ENCODE measurements at regions of chr9 and their contacts with region 1.

Region 1: GRCh38 chr9:107749787-107750444 is 260.3 kb upstream of the KLF4 start:
- DNase-seq: peak; percentile 90 to 97
- ATAC-seq: peak; percentile 84
- H3K4me3 ChIP-seq: peak overlapping the region in 1 of 4 donors; percentile 19
- H3K27ac ChIP-seq: peak overlapping the region; percentile 87 to 91 (median 88)
- H3K4me1 ChIP-seq: peaks cover 23 to 36% of the 10 kb centered on the region in 2 donors
- H3K27me3 ChIP-seq: no peaks in the 10 kb centered on the region
- CTCF ChIP-seq: no peak
- POLR2A ChIP-seq: peak; percentile 6 to 27

Region 2: GRCh38 chr9:107489687-107490605 is 260.0 kb before region 1 on chr9 and contains the start of gene KLF4:
- in situ Hi-C with region 1: loop called (anchors 25 kb)
- intact Hi-C with region 1: loop called (anchors 2 kb)
- DNase-seq: peak; percentile 89 to 91
- ATAC-seq: peak; percentile 82 to 84
- H3K4me3 ChIP-seq: peak within 1 kb of the TSS; percentile 75 to 91 (median 82)
- H3K27ac ChIP-seq: peak within 1 kb of the TSS; percentile 82 to 90 (median 90)
- H3K4me1 ChIP-seq: peaks cover 8 to 9% of the 10 kb centered on the region in 2 donors
- H3K27me3 ChIP-seq: no peaks in the 10 kb centered on the region
- CTCF ChIP-seq: no peak
- POLR2A ChIP-seq: peak; percentile 94 to 95
- total RNA-seq, gene KLF4: 15.7 to 62.6 (median 32.4) TPM

Region 3: GRCh38 chr9:107685901-107686300 is 64.0 kb before region 1 on chr9:
- in situ Hi-C with region 1: no loop called
- intact Hi-C with region 1: loop called (anchors 2 kb)
- DNase-seq: peak; percentile 58 to 76
- ATAC-seq: peak; percentile 100
- H3K4me3 ChIP-seq: no peak overlapping the region
- H3K27ac ChIP-seq: peak overlapping the region; percentile 28 to 71 (median 64)
- H3K4me1 ChIP-seq: peaks cover 0 to 10% of the 10 kb centered on the region in 2 donors
- H3K27me3 ChIP-seq: no peaks in the 10 kb centered on the region
- CTCF ChIP-seq: no peak
- POLR2A ChIP-seq: no peak

Region 4: DNA sequence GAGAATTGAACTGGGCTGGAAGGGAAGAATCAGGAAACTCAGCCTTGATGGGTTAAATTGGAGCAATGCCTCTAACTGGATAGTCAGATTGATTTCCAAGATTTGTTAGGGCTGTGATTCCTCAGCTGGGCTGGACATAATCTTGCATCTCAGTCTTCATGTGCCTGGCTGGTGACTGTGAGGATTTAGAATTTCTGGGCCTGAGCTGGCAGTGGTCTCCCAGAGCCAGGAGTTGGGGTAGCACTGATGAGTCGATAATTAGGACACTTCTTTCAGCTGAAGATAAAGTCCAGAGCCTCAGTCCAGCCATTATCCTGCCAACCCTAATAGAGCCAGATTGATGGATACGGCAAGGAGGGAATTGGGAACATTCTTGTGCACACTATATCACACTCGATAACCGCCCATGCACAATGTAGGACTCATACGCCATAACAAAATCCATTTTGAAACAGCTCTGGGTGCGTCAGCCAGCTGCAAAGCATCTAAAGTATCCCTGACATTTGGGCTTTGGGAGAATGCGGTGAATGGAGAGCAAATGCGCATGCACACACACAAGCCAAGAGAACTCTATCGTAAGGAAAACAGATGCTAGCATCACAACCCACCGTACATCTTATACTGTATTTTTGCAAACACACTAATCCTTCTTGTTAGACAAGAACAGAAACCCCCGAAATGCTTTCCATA is 144.8 kb after region 1 on chr9:
- in situ Hi-C with region 1: no loop called
- intact Hi-C with region 1: loop called (anchors 5 kb)
- DNase-seq: no peak
- ATAC-seq: no peak
- H3K4me3 ChIP-seq: no peak overlapping the region
- H3K27ac ChIP-seq: no peak overlapping the region
- H3K4me1 ChIP-seq: peaks cover 11 to 19% of the 10 kb centered on the region in 2 donors
- H3K27me3 ChIP-seq: no peaks in the 10 kb centered on the region
- CTCF ChIP-seq: no peak
- POLR2A ChIP-seq: no peak

Region 5: DNA sequence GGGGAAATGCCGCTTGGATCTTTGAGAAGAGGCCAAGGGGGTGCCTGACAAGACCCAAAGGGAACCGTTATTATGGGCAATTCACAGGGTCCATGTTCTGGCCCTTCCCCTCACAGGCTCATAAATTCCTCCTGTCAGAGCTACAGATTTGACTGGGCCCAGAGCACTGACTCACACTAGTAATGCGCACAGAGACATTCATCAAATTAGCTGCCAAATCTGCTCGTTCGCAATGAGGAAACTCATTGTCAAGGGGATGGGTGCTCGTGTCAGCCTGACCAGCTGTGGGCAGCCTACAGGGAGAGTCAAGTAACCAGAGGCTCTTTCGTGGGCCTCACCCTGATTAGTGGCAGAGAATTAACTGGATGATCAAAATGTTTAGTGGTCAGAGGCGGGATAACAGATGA is 728.5 kb after region 1 on chr9:
- in situ Hi-C with region 1: no loop called
- intact Hi-C with region 1: loop called (anchors 5 kb)
- DNase-seq: peak; percentile 60 to 71
- ATAC-seq: peak; percentile 72 to 79
- H3K4me3 ChIP-seq: no peak overlapping the region
- H3K27ac ChIP-seq: peak overlapping the region; percentile 75 to 90 (median 84)
- H3K4me1 ChIP-seq: peaks cover 37 to 60% of the 10 kb centered on the region in 2 donors
- H3K27me3 ChIP-seq: no peaks in the 10 kb centered on the region
- CTCF ChIP-seq: peak in 2 of 5 experiments; percentile 30 to 33
- POLR2A ChIP-seq: no peak